ENCODE measurements at regions of chr10 and their contacts with region 1.

Region 1: DNA sequence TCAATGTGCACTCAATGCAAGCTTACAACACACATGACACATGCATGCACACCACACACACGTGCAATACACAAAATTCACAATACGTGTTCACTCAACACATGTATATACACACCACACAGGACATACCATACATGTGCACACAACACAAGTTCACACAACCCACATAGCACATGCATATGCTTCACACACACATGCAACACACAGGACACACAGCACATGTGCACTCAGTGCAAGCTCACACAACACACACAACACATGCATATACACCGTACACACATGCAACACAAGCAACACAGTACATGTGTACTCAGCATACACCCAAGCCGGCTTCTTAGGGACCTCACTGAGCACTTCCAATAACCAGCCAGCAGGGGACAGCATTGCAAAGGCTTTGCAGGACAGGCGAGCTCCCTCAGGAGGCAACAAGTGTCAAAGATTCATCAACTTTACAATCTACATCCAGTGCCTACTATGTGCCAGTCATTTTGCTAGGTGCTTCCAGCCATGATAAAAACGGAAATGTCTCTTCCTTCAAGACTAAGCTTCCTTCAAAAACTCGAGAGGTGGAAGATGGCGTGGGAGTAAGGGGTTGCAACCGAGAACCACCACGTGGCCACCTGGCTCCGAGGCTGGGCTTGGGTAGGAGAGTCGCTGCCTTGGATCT is 61.1 kb downstream of the JCAD start:
- DNase-seq: peak; percentile 73
- H3K4me3 Mint-ChIP-seq: no peak overlapping the region
- H3K27ac Mint-ChIP-seq: no peak overlapping the region
- H3K4me1 Mint-ChIP-seq: peaks cover 26% of the 10 kb centered on the region
- H3K27me3 Mint-ChIP-seq: peaks cover 27% of the 10 kb centered on the region

Region 2: DNA sequence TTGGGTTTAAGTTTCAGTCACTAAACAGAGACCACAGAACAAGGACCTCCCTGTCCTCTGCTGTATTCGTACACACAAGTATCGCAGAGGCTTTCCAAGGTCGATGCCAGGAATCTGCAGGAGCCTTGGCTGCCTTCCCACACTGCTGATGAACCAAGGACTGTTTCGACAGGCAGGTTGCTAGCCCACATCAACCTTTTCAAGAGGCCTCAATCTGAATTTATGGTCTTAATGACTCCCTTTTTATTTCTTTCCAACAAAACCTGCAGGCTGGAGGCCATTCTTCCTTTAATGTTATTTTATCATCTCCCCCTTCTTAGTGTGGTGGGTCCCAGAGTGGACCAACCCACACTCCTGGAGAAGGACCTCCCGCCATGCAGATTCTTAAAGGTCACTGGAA is 15.5 kb after region 1 on chr10:
- intact Hi-C with region 1: loop called (anchors 1 kb)
- DNase-seq: no peak
- H3K4me3 Mint-ChIP-seq: peak overlapping the region; percentile 70
- H3K27ac Mint-ChIP-seq: peak overlapping the region; percentile 94
- H3K4me1 Mint-ChIP-seq: peaks cover 68% of the 10 kb centered on the region
- H3K27me3 Mint-ChIP-seq: no peaks in the 10 kb centered on the region

Region 3: DNA sequence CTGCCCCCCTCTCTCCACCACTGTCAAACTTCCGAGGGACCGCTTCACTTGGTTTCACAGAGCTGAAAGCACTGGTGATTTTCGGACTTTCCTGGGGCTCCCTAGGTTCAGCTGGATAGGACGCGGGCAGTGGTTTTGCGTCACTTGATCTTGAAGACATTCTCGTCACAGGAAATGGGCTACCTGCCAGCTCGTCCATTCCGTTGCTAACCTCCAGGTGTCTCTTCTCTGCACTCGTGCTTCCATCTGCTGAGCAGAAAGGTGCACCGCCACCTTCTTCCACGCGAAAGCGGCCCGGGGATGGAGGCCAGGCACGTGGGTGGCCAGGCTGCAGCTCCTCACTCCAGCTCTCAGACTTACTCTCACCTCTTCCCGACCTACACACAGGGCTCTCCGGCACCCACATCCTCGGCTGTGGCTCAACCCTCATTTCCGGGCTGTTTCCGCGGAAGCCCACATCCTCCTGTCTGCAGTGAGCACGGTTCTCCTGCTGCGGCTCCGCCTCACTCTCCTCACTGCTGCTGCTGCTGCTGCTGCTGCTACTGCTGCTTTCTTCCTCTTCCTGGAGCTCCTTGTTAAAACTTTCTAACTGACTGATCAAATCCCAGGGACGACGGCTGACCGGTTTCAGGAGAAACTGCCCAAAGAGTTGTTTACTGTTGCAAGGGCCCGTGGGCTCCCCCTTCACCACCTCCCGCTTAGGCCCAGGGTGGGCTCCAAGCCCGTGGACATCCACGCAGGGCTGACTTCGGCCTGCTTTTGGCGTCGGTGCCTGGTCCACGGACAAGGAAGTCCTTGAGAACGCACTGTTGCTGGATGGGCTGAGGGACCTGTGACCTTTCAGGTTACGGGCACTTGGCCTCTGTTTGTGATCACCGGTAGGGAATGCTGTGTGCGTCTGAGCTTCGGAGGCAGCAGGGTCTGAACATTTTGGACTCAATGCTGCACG is 29.1 kb after region 1 on chr10:
- intact Hi-C with region 1: loop called (anchors 1 kb)
- DNase-seq: peak; percentile 95
- H3K4me3 Mint-ChIP-seq: peak overlapping the region; percentile 97
- H3K27ac Mint-ChIP-seq: peak overlapping the region; percentile 91
- H3K4me1 Mint-ChIP-seq: peaks cover 62% of the 10 kb centered on the region
- H3K27me3 Mint-ChIP-seq: no peaks in the 10 kb centered on the region

Region 4: DNA sequence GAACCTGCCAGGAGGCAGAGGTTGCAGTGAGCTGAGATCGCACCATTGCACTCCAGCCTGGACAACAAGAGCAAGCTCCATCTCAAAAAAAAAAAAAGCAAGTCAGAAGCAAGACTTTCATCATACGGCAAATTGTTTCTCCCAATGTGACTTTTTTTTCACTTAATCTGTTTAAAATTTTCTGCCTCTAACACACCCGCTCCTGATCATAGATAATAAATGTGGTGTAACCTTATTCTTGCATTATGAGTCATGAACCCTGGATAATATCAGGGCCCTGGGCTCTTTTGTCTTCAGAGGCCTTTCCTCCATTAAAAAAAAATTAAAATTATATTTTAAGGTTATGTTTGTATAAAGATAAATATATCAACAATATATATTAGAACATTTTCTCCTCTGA is 172.5 kb after region 1 on chr10:
- intact Hi-C with region 1: loop called (anchors 5 kb)
- DNase-seq: no peak
- H3K4me3 Mint-ChIP-seq: peak overlapping the region; percentile 10
- H3K27ac Mint-ChIP-seq: peak overlapping the region; percentile 43
- H3K4me1 Mint-ChIP-seq: peaks cover 31% of the 10 kb centered on the region
- H3K27me3 Mint-ChIP-seq: peaks cover 22% of the 10 kb centered on the region

Region 5: GRCh38 chr10:30231071-30231652 is 232.9 kb after region 1 on chr10:
- intact Hi-C with region 1: loop called (anchors 2 kb)
- DNase-seq: peak; percentile 25
- H3K4me3 Mint-ChIP-seq: no peak overlapping the region
- H3K27ac Mint-ChIP-seq: peak overlapping the region; percentile 13
- H3K4me1 Mint-ChIP-seq: peaks cover 42% of the 10 kb centered on the region
- H3K27me3 Mint-ChIP-seq: no peaks in the 10 kb centered on the region

Region 6: GRCh38 chr10:30241422-30242110 is 243.3 kb after region 1 on chr10:
- intact Hi-C with region 1: loop called (anchors 1 kb)
- DNase-seq: no peak
- H3K4me3 Mint-ChIP-seq: no peak overlapping the region
- H3K27ac Mint-ChIP-seq: no peak overlapping the region
- H3K4me1 Mint-ChIP-seq: peaks cover 24% of the 10 kb centered on the region
- H3K27me3 Mint-ChIP-seq: no peaks in the 10 kb centered on the region

Region 7: DNA sequence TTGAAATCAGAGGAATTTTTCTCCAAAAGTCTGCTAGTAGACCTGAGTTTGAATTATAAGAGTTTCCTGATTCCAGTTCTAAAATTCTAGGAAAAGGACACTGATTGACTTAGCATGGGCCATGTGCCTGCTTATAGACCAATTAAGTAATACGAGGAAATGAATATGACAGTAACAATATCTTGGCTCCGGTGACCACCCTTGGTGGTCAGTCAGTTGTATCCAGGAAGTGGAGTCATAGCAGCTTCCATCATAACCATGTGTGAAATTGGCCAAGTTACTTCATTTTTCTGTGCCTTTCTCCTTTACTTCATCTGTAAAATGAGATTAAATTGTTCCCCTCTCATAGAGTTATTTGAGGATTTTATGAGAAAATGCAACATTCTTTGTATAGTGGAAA is 283.9 kb after region 1 on chr10:
- intact Hi-C with region 1: no loop called
- DNase-seq: no peak
- H3K4me3 Mint-ChIP-seq: no peak overlapping the region
- H3K27ac Mint-ChIP-seq: no peak overlapping the region
- H3K4me1 Mint-ChIP-seq: peaks cover 8% of the 10 kb centered on the region
- H3K27me3 Mint-ChIP-seq: peaks cover 3% of the 10 kb centered on the region

Region 8: GRCh38 chr10:30384701-30385201 is 386.5 kb after region 1 on chr10:
- intact Hi-C with region 1: loop called (anchors 2 kb)
- DNase-seq: no peak
- H3K4me3 Mint-ChIP-seq: no peak overlapping the region
- H3K27ac Mint-ChIP-seq: no peak overlapping the region
- H3K4me1 Mint-ChIP-seq: no peaks in the 10 kb centered on the region
- H3K27me3 Mint-ChIP-seq: peaks cover 18% of the 10 kb centered on the region

Measured in activated T-helper 2 cell treated with anti-CD3 and anti-CD28 coated beads, Interferon-gamma antibody, Interleukin-2, Interleukin-4, amounts not matched to agents 10 μg/mL and 5 μg/mL and 100 μg/mL, durations not matched to agents 14 hours and 24 hours and 36 hours (primary cell).